Activated CD4-positive, alpha-beta memory T cell treated with anti-CD3 and anti-CD28 coated beads, Interleukin-2, amount 10 ng/mL, durations not matched to agents 7 days and 5 days (primary cell): ENCODE measurements at regions of chr6 and their contacts with region 1.

Region 1: GRCh38 chr6:137661601-137662000 is 167.4 kb upstream of the OLIG3 start:
- DNase-seq: peak; percentile 32
- H3K4me3 Mint-ChIP-seq: no peak overlapping the region
- H3K27ac Mint-ChIP-seq: no peak overlapping the region
- H3K4me1 Mint-ChIP-seq: peaks cover 39% of the 10 kb centered on the region
- H3K27me3 Mint-ChIP-seq: no peaks in the 10 kb centered on the region

Region 2: GRCh38 chr6:137631323-137631722 is 30.3 kb before region 1 on chr6:
- CTCF ChIA-PET with region 1: no interaction called
- POLR2A ChIA-PET with region 1: no interaction called
- DNase-seq: no peak
- H3K4me3 Mint-ChIP-seq: no peak overlapping the region
- H3K27ac Mint-ChIP-seq: no peak overlapping the region
- H3K4me1 Mint-ChIP-seq: peaks cover 10% of the 10 kb centered on the region
- H3K27me3 Mint-ChIP-seq: peaks cover 4% of the 10 kb centered on the region

Region 3: DNA sequence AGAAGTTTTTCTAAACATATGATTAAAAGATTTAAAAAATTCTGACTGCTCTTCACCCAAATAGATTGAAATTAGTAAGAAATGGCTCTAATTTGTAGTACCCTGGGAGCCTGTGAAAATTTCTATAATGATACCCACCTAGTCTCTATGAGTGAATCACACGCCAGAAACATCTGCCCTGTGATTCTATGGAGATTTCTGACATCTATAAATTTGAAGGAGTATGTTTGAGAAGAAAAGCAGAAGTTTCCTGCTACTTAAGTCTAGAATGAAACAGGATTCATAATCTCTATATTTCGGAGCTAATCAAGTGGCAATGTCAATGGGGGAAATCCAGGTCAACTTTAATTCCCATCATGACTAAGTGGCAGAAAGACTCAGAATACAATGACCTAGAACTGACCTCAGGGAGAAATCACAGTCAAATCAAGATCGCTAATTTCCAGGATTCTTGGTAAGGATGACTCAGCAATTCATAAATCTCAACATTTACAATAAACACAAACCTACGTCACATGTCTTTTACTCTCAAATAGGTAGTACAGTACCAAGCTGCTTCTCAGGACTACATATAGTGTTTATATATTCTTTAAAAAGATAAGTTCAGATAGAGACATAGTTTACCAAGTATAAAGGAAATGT is 19.2 kb after region 1 on chr6:
- CTCF ChIA-PET with region 1: interaction called, 9 read pairs
- POLR2A ChIA-PET with region 1: interaction called, 17 read pairs
- DNase-seq: no peak
- H3K4me3 Mint-ChIP-seq: peak overlapping the region; percentile 12
- H3K27ac Mint-ChIP-seq: peak overlapping the region; percentile 54
- H3K4me1 Mint-ChIP-seq: peaks cover 76% of the 10 kb centered on the region
- H3K27me3 Mint-ChIP-seq: no peaks in the 10 kb centered on the region

Region 4: GRCh38 chr6:137697267-137697938 is 35.8 kb after region 1 on chr6:
- CTCF ChIA-PET with region 1: interaction called, 18 read pairs
- POLR2A ChIA-PET with region 1: interaction called, 6 read pairs
- DNase-seq: no peak
- H3K4me3 Mint-ChIP-seq: no peak overlapping the region
- H3K27ac Mint-ChIP-seq: peak overlapping the region; percentile 52
- H3K4me1 Mint-ChIP-seq: peaks cover 53% of the 10 kb centered on the region
- H3K27me3 Mint-ChIP-seq: no peaks in the 10 kb centered on the region